Ovary (tissue), 10 donors: ENCODE measurements at regions of chr20 and their contacts with region 1.

Region 1: DNA sequence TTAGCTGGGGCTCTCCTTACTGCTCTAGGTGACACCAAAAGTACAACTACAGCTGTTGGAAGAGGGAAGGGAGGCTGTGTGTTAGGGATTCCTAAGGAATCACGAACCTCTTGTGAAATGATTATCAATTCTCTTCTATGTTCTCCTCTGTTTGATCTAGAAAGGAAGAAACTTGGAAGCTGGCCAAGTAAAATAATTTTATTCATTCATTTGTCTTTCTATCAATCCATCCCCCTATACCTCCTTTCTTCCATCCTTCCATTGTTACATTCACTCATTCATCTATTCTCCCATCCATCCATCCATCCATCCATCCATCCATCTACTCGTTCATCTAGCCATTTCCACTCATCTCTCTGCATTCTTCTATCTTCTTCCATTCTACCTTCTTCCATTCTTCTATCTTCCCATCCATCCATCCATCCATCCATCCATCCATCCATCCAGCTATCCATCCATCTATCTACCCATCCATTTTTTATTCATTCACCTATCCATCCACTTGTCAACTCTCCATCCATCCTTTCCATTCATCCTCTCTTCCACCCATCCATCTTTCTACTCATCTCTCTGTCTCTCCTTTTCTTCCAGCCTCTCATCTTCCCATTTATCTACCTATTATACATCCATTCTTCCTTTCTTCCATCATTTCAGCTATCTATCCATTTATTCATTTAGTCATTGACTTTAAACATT is 52.8 kb upstream of the ZNFX1 start:
- DNase-seq: no peak
- H3K4me3 ChIP-seq: no peak overlapping the region
- H3K27ac ChIP-seq: no peak overlapping the region
- H3K4me1 ChIP-seq: no peaks in the 10 kb centered on the region
- H3K27me3 ChIP-seq: no peaks in the 10 kb centered on the region
- CTCF ChIP-seq: no peak
- EP300 ChIP-seq: no peak
- POLR2A ChIP-seq: no peak

Region 2: DNA sequence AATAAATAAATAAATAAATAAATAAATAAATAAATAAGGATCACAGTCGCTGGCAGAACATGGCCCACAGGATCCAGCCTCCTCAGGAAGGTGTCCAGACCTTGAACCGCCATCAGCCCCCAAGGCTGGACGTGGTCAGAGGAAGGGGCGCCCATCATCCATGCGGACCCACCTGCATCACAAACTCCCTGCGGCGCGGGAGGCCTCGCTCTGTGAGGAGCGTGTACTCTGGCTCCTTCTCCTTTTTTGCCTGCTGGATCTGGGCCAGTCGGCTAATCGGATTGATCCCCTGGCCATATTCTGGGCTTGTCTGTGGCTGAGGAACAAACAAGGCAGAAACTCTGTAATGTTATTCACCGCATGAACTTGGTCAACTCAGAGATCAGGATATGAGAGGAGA is 207.8 kb before region 1 on chr20:
- intact Hi-C with region 1: no loop called
- DNase-seq: no peak
- H3K4me3 ChIP-seq: no peak overlapping the region
- H3K27ac ChIP-seq: no peak overlapping the region
- H3K4me1 ChIP-seq: no peaks in the 10 kb centered on the region
- H3K27me3 ChIP-seq: no peaks in the 10 kb centered on the region
- CTCF ChIP-seq: no peak
- EP300 ChIP-seq: no peak
- POLR2A ChIP-seq: no peak

Region 3: DNA sequence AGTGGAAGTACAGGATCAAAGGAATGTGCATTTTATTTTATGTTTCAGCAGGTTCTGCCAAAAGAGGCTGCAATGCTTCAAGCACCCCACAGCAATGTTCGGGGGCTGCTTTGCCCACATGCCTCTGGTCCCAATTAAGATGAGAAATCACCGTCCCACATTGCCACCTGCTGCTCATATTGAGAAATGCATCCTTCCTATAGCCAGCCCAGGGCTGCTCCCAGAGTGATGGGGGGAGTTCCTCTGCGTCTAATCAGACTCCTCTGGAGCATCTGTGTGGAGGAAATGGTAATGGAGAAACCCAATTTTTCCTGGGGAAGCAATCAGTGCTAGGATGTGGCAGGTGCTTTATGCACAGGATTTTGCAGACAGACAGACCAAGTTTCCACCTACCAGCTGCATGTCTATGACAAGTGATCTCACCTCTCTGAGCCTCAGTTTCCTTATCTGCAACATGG is 203.6 kb after region 1 on chr20:
- intact Hi-C with region 1: loop called in 2 of 4 experiments (anchors 2 to 5 kb)
- DNase-seq: peak in 4 of 5 donors; percentile 32 to 62 (median 50)
- H3K4me3 ChIP-seq: no peak overlapping the region
- H3K27ac ChIP-seq: no peak overlapping the region
- H3K4me1 ChIP-seq: no peaks in the 10 kb centered on the region
- H3K27me3 ChIP-seq: no peaks in the 10 kb centered on the region
- CTCF ChIP-seq: peak; percentile 38 to 65 (median 61)
- EP300 ChIP-seq: no peak
- POLR2A ChIP-seq: no peak